ENCODE measurements at regions of chr1 and their contacts with region 1.

Region 1: GRCh38 chr1:84620720-84621313 is 46.6 kb upstream of the CTBS start:
- DNase-seq: peak; percentile 85
- H3K4me3 Mint-ChIP-seq: peak overlapping the region; percentile 93
- H3K27ac Mint-ChIP-seq: peak overlapping the region; percentile 94
- H3K4me1 Mint-ChIP-seq: peaks cover 18% of the 10 kb centered on the region
- H3K27me3 Mint-ChIP-seq: no peaks in the 10 kb centered on the region

Region 2: GRCh38 chr1:83931658-83932253 is 689.1 kb before region 1 on chr1:
- CTCF ChIA-PET with region 1: no interaction called
- intact Hi-C with region 1: loop called (anchors 2 kb)
- DNase-seq: peak; percentile 24
- H3K4me3 Mint-ChIP-seq: no peak overlapping the region
- H3K27ac Mint-ChIP-seq: no peak overlapping the region
- H3K4me1 Mint-ChIP-seq: no peaks in the 10 kb centered on the region
- H3K27me3 Mint-ChIP-seq: peaks cover 8% of the 10 kb centered on the region

Region 3: DNA sequence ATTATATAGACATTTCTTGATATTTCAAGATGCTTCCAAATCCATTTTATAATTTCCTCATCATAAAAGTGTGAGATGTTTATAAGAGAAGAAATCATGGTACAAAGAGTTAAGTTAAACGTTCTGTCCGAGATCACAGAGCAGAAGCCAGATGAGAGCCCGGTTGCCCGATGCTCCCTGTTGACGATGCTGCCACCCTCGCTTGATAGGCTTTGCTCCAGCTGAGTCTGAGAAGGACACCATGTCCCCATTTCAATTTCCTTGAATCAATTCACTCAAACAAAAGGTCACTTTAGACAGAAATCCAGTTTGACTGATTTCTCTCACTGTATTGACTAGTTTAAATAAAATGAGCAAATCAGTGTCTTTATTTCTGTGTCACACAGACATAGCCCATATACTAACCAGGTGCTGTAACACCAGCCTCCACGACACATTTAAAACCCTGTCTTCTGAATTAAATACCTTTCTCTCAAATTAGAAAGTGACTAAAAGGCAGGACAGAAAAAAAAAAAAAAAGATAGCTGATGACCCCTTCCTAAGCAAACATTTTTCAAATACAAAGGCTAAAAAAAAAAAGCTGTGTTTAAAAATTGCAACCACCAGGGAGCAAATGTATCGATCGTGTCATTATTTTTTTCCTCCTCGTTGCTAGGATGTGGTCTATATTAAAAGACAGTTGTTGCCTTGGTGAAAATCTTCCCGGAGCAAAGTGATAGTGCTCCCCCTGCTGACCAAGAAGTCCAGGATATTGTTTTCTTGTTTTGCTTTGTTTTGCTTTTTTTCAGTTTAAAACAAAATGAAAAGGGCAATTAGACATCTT is 187.3 kb before region 1 on chr1:
- CTCF ChIA-PET with region 1: interaction called, 14 read pairs
- intact Hi-C with region 1: no loop called
- DNase-seq: peak; percentile 76
- H3K4me3 Mint-ChIP-seq: peak overlapping the region; percentile 63
- H3K27ac Mint-ChIP-seq: peak overlapping the region; percentile 25
- H3K4me1 Mint-ChIP-seq: peaks cover 15% of the 10 kb centered on the region
- H3K27me3 Mint-ChIP-seq: no peaks in the 10 kb centered on the region

Region 4: DNA sequence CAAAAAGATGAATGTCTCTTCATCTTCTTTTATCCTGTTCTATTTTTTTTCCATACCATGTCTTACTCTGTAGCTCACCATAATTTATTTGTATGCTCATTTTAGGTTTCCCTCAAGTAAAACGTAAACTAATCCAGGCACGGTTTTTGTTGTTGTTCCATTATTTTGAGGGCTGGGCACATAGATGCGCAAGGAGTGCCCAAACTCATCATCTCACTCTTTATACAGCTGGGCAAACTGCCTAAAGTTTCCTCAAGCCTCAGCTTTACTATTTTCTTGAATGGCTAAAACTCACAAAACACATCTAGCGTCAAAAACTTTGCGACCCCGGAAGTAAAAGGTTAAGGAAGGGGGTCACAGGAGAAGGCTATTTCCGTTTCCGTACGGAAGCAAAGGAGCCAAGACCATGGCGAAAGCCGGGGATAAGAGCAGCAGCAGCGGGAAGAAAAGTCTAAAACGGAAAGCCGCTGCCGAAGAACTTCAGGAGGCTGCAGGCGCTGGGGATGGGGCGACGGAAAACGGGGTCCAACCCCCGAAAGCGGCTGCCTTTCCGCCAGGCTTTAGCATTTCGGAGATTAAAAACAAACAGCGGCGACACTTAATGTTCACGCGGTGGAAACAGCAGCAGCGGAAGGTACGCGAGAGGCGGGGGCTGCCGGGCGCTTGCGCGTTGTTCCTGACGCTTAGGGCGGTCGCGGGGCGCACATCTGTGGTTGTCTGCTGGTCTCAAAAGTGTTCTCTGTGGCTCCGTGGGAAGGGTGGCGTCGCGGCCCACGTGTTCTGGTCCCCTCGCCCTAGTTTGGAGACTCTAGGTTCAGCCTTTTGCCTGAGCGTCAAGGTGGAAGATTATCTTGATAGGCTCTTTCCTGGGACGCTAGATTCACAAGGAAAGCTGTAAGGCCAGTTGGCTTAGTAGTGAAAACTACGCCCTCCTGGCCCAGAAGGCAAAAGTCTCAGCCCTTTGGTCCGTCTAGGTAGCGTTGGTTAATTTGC is 141.6 kb before region 1 on chr1 and contains the start of gene RPF1:
- CTCF ChIA-PET with region 1: interaction called, 12 read pairs
- intact Hi-C with region 1: loop called (anchors 1 kb)
- DNase-seq: peak; percentile 74
- H3K4me3 Mint-ChIP-seq: peak within 1 kb of the TSS; percentile 99
- H3K27ac Mint-ChIP-seq: peak within 1 kb of the TSS; percentile 95
- H3K4me1 Mint-ChIP-seq: peaks cover 34% of the 10 kb centered on the region
- H3K27me3 Mint-ChIP-seq: peaks cover 18% of the 10 kb centered on the region
- total RNA-seq, gene RPF1: 57.2 to 57.6 TPM

Region 5: DNA sequence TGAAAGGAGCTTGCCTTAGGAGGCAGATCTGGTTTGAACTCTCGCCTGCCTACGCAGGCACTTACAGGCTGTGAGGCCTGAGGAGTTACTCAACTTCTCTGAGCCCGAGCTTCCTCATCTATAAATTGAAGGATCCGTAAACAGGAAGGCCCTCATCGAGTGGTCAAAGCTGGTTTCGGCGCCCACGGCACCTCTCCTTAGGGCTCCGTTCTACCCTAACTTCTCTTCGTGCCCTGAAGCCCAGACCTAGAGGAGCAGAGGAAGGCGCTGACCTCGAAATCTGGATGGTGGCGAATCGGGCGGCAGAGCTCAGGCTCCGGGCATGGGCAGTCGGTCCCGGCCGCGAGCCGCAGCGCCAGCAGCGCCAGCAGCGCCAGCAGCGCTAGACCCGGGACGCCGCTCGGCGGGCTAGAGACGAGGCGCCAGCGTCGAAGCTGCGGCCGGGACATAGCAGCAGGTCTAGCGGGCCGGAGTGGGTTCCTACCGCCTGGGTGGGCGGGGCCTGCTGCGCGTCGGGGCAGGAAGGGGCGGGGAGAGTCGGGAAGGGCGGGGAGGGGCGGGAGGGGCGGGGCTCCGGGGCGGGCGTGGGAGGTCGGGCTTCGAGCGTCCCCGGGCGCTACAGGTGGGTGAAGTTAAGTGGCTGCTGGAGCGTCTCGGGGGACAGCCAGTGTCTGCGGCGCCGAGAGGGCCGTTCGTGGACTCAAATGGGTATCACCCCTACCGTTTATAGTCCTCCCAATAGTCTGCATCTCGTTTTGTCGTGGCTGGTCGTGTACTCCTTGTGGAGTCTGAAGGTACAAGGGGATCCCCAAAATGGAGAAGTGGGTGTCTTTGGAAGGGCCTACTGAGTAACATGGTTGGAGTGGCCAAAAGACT is 46.6 kb before region 1 on chr1 and contains the start of gene CTBS:
- CTCF ChIA-PET with region 1: interaction called, 8 read pairs
- intact Hi-C with region 1: loop called (anchors 1 kb)
- DNase-seq: peak; percentile 86
- H3K4me3 Mint-ChIP-seq: peak within 1 kb of the TSS; percentile 95
- H3K27ac Mint-ChIP-seq: peak within 1 kb of the TSS; percentile 98
- H3K4me1 Mint-ChIP-seq: peaks cover 28% of the 10 kb centered on the region
- H3K27me3 Mint-ChIP-seq: no peaks in the 10 kb centered on the region
- total RNA-seq, gene CTBS: 21.1 to 21.2 TPM

Region 6: DNA sequence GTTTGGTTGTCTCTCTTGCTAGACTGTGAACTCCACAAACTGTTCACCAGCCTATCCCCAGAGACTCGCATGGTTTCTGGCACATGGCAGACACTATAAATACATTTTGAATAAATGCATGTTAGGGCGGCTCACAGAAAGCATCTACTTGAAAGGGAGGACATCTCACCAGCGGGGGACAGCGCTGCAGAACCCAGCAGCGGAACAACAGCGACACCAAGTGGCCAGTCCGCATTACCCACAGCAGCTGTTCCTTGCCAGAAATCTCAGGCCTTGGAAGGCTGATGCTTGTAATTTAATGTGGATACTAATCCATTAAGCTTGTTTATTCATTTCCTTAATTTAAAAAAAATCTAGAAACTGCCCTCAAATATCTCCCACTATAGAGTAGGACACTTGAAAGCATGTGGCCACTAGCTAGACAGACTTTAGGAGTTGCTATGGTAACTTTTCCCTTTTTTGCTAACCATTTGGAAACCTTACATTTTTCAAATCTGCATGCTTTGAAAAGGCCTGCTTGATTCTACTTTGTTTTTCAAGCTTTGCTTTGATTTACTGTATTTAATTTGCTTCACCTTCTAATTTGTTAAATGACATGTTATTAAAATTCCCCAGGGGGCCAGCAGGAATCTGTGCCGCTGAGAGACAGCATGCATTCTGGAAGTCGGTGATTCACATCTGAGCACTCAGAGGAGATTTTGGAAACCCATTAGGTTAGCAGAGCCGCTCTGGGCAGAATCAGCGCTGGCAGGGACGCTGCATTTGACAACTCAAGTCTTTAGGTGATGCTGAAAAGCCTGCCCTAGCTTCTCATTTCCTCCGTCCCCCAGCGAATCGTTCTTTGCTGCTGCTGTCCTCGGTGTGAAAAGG is 132.9 kb after region 1 on chr1:
- CTCF ChIA-PET with region 1: interaction called, 15 read pairs
- intact Hi-C with region 1: loop called (anchors 1 kb)
- DNase-seq: peak; percentile 86
- H3K4me3 Mint-ChIP-seq: no peak overlapping the region
- H3K27ac Mint-ChIP-seq: no peak overlapping the region
- H3K4me1 Mint-ChIP-seq: peaks cover 6% of the 10 kb centered on the region
- H3K27me3 Mint-ChIP-seq: peaks cover 6% of the 10 kb centered on the region

Region 7: DNA sequence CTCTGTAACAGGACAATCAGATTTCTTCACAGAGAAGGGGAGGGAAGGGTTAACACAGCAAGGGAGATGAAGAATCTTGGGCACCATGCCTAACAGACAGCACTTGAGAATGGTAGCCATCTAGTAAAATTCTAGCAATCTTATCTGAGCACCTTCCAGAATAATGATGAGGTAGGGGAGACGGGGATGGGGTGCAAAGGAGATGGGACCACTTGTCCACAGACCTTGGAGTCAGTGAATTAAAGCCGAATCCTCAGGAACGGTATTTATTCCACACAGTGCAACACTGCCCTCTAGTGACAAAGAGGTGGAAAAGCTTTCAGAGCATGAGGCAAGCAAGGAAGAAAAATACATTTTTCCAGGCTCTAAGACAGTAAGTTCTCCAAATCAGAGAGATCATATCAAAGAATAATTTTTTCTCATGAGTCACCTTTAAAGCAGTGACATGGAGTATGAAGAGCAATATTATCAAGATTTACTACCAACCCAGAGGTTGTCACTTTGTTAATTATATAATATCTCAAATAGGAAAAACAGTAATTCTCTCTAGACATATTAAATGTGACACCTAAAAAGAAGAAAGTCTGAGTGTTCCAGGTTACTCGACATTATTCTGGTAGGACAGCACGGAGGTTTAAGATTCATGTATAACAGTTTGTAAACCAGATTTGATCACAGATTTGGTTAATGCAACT is 315.4 kb after region 1 on chr1:
- CTCF ChIA-PET with region 1: interaction called, 5 read pairs
- intact Hi-C with region 1: loop called (anchors 2 kb)
- DNase-seq: peak; percentile 43
- H3K4me3 Mint-ChIP-seq: no peak overlapping the region
- H3K27ac Mint-ChIP-seq: no peak overlapping the region
- H3K4me1 Mint-ChIP-seq: peaks cover 4% of the 10 kb centered on the region
- H3K27me3 Mint-ChIP-seq: no peaks in the 10 kb centered on the region

Measured in activated naive CD4-positive, alpha-beta T cell treated with anti-CD3 and anti-CD28 coated beads for 36 hours (primary cell).